PC-9 (cell line): ENCODE measurements at regions of chr1 and their contacts with region 1.

Region 1: DNA sequence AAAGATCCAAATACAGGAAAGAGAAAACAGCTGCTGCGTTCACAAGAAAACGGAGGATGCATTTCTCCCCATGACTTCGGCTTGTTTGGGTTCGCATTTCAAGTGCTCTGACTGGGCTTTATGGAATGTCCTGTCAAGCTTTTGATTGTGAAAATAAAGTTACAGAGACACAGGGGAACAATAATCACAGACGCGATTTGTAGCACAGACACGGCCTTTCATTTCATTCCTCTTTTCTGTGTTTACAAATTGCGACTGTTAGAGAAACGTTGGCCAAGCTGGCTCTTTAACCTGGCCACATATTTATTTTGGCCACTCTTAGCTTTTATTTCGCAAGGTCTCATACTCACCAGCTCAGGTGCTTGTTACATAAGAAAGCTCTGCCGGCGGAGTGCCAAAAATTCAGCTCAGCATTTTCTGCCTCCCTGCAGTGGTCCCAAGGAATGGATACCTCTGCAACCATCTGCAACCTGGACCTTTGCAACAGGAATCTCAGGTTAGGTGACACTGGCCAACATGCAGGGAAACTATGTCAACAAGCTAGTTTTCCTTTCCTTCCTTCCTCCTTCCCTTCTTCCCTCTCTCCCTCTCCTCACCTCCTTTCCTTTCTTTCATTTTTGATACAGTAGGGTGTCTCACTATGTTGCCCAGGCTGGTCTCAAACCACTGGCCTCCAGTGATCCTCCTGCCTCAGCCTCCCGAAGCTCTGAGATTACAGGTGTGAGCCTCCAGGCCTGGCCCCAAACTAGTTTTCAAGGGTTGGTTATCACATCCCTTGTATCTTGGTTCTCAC is 58.2 kb upstream of the SLC45A1 start:
- DNase-seq: peak; percentile 80 to 82
- H3K4me3 ChIP-seq: peak overlapping the region; percentile 49; the same call in 1 of the 2 replicates
- H3K27ac ChIP-seq: peak overlapping the region; percentile 100
- H3K4me1 ChIP-seq: peaks cover 43% of the 10 kb centered on the region
- H3K27me3 ChIP-seq: no peaks in the 10 kb centered on the region
- CTCF ChIP-seq: no peak

Region 2: GRCh38 chr1:8122171-8122487 is 137.6 kb before region 1 on chr1:
- CTCF ChIA-PET with region 1: no interaction called
- POLR2A ChIA-PET with region 1: no interaction called
- intact Hi-C with region 1: no loop called
- DNase-seq: peak in 1 of 2 experiments; percentile 52
- H3K4me3 ChIP-seq: peak overlapping the region; percentile 28; the same call in 1 of the 2 replicates
- H3K27ac ChIP-seq: peak overlapping the region; percentile 100
- H3K4me1 ChIP-seq: peaks cover 77% of the 10 kb centered on the region
- H3K27me3 ChIP-seq: no peaks in the 10 kb centered on the region
- CTCF ChIP-seq: no peak

Region 3: DNA sequence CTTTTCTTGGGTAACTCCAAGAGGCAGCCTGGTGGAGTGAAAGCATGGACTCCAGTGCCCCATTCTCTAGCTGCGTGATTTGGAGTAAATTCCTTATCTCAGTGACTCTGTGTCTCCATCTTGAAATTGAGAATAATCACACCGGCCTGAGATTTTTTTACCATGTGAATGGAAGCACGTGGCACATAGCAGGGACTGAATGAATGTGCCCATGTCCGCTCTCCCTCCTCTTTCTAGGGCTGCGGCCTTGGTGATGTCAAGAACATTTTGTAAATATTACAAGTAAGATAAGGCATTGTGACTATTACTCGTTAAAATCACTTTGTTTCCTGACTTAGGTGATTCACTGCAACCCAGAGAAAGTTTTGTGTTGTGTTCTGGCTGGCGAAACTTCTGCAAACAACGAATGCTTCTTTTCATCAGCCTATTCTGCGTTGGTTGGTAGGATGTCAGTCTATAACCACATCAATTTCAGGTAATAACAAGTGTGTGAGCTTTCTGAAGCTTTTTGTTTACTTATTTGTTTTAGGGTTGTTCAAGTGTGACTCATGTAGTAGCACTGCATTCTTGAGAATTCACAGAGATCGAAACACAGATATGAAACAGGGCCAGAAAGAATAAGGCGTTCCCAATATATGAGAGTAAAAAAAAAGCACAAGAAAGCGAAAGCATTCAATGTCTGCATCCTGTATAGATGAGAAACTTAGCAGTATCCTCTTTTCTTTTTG is 77.5 kb before region 1 on chr1:
- CTCF ChIA-PET with region 1: no interaction called
- POLR2A ChIA-PET with region 1: no interaction called
- intact Hi-C with region 1: loop called (anchors 1 kb)
- DNase-seq: peak; percentile 64 to 98
- H3K4me3 ChIP-seq: peak overlapping the region; percentile 28; the same call in 1 of the 2 replicates
- H3K27ac ChIP-seq: peak overlapping the region; percentile 100
- H3K4me1 ChIP-seq: peaks cover 40% of the 10 kb centered on the region
- H3K27me3 ChIP-seq: no peaks in the 10 kb centered on the region
- CTCF ChIP-seq: no peak

Region 4: DNA sequence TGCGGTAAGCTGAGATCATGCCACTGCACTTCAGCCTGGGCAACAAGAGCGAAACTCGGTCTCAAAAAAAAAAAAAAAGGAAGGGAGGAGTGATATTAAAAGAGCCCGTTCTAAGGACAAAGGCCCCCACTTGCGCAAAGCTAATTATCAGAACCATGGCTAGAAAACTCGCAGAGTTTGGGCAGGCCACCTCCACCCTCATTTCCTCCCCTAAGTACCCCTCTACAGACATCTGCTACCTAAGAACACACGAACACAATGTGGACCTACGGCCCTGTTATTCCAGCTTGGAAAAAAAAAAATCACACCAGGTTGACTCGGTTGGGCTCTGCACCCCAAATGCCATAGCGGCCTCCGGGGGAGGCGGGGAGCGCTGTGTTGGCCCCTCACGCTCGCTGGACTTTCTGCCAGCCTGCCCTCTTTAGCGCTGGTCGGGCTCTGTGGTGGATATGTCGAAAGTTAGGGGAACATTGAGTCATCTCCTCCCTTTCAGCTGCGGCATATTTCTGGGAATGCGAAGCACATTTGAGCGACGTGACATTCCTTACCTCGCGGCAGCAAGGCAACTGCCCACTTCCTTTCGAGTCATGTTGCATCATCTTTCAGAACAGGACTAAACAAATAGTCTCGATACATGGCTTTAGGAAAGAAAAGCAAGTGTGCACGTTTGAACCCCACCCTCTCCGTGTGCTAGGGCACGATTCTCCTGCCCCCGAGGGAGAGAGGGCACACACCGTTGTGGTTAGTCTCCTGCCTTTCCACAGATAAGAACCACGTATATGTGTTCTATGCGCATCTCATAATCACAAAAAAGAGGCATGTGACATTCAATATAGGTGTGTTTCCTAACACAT is 47.9 kb before region 1 on chr1:
- CTCF ChIA-PET with region 1: no interaction called
- POLR2A ChIA-PET with region 1: interaction called, 22 read pairs
- intact Hi-C with region 1: loop called (anchors 2 kb)
- DNase-seq: peak; percentile 84 to 95
- H3K4me3 ChIP-seq: peak overlapping the region; percentile 38; the same call in 1 of the 2 replicates
- H3K27ac ChIP-seq: peak overlapping the region; percentile 99
- H3K4me1 ChIP-seq: peaks cover 51% of the 10 kb centered on the region
- H3K27me3 ChIP-seq: no peaks in the 10 kb centered on the region
- CTCF ChIP-seq: no peak

Region 5: DNA sequence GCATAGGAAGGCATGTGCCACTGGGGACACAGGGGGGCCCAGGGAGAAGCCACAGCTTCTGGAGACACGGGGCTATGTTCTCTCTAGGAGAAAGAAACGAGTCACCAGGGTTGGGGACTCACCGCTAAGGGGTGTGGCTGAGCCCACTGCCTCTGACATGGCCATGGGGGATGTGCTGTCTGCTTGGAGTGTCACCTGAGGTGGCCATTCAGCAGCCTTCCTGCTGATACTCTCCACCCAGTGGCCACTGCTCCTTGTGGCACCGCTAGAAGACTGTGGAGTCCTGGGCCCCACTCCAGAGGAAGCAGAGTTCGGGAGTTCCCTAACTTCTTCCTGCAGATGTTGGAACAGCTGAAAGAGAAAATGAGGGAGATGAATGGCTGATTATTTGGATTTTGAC is 32.9 kb before region 1 on chr1:
- CTCF ChIA-PET with region 1: no interaction called
- POLR2A ChIA-PET with region 1: interaction called, 22 read pairs
- intact Hi-C with region 1: no loop called
- DNase-seq: no peak
- H3K4me3 ChIP-seq: no peak overlapping the region
- H3K27ac ChIP-seq: no peak overlapping the region
- H3K4me1 ChIP-seq: peaks cover 17% of the 10 kb centered on the region
- H3K27me3 ChIP-seq: no peaks in the 10 kb centered on the region
- CTCF ChIP-seq: no peak

Region 6: GRCh38 chr1:8232036-8232757 is 27.5 kb before region 1 on chr1:
- CTCF ChIA-PET with region 1: no interaction called
- POLR2A ChIA-PET with region 1: interaction called, 17 read pairs
- intact Hi-C with region 1: no loop called
- DNase-seq: no peak
- H3K4me3 ChIP-seq: no peak overlapping the region
- H3K27ac ChIP-seq: no peak overlapping the region
- H3K4me1 ChIP-seq: no peaks in the 10 kb centered on the region
- H3K27me3 ChIP-seq: no peaks in the 10 kb centered on the region
- CTCF ChIP-seq: no peak